ENCODE measurements at regions of chr13 and their contacts with region 1.

Region 1: DNA sequence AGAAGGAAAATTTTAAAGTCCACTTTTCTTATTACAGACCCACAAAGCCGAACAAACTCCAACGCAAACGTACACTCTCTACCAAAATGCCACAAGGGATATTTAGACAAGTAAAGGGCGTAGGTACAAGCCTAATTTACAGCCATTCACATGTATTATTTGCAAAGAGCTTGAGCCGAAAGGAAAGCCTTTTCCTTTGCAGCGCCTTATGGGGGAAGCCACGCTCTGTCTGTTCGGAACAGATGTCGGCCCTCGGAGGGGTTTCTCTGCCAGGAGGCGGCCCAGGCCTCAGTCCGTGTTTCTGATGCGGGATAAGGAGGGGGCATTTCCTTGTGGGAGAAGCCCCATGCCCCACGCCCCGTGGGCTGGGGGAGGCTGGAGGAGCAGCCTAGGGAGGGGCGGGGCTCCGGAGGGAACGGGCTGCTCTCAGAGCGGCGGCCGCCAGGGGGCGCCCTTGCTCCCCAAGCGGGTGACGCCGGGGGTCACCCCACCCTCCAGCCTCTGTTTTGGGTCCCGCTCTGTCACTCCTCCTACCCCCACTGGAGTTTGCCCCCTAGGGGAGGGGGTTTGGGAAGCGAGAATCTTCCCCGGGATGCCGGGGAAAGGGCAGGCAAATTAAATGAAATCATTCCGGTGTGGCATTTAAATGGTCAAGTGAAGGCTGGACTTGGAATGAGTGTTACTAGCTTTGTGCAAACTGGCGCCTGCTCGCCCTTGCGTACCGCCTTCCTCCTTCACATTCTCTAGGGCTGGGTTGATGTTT is 2.9 kb downstream of the HTR2A start:
- DNase-seq: peak; percentile 86
- CTCF ChIP-seq: peak; percentile 78

Region 2: DNA sequence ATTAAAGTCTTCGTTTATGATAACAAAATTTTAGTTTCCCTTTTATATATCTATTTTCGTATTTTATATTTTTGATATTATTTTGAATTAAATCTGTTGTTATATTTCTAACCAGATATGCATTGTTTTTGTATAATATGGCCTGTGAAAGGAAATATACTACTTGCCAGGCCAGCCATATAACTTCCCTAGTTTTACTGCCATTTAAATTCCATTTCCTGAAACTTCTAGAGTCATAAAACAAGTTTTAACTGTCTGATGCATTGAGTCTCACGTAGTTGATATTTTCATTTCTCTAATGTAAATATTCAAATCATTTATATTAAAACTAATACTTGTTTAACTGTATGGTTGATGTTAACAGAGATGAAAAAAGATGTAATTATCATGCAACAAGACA is 110.5 kb before region 1 on chr13:
- CTCF ChIA-PET with region 1: no interaction called
- POLR2A ChIA-PET with region 1: no interaction called
- DNase-seq: no peak
- CTCF ChIP-seq: no peak

Region 3: GRCh38 chr13:46846726-46847125 is 47.3 kb before region 1 on chr13:
- CTCF ChIA-PET with region 1: interaction called, 15 read pairs
- POLR2A ChIA-PET with region 1: no interaction called
- DNase-seq: no peak
- CTCF ChIP-seq: no peak

Region 4: DNA sequence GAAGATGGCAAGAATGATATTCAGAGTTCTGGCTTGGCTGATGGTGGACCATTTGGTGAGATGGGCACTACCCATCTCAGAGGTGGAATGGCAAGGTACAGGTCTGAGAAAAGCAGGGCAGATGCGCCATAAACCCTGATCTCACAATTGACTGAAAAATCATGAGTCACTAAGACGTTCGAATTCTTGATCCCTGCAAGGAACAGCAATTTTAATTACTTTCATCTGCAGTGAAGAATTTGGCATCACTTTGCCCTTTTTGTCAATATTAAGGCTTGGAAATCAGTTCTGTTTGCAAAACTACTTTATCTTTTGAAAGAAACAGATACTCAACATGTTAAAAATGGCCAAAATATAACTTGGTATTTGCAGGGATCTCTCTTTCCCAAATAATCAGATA is 35.2 kb before region 1 on chr13:
- CTCF ChIA-PET with region 1: interaction called, 12 read pairs
- POLR2A ChIA-PET with region 1: no interaction called
- DNase-seq: no peak
- CTCF ChIP-seq: no peak

Region 5: GRCh38 chr13:46908501-46908900 is 14.5 kb after region 1 on chr13:
- CTCF ChIA-PET with region 1: interaction called, 24 read pairs
- POLR2A ChIA-PET with region 1: no interaction called
- DNase-seq: no peak
- CTCF ChIP-seq: no peak

Region 6: GRCh38 chr13:46961719-46962118 is 67.7 kb after region 1 on chr13:
- CTCF ChIA-PET with region 1: interaction called, 15 read pairs
- POLR2A ChIA-PET with region 1: no interaction called
- DNase-seq: peak; percentile 71
- CTCF ChIP-seq: no peak

Region 7: DNA sequence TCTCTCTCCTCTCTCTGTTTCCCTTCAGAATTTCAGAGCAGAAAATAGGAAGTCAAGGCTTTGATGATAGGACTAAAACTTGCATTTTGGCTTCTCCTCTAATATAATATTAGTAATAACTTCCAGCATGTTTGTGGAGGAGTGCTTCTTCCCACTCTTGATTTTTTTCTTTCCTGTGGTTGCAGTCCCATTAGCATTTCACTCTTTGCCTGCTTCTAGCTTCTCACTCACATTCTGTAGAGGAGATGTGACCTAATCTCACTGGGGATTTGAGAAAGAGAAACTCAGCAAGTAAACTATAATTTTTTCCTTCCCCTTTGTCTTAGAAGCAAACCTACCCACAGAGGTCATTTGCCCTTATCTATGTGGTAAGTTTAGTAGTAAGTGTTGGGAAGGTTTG is 172.2 kb after region 1 on chr13:
- CTCF ChIA-PET with region 1: no interaction called
- POLR2A ChIA-PET with region 1: no interaction called
- DNase-seq: no peak
- CTCF ChIP-seq: no peak

Region 8: GRCh38 chr13:47459512-47459911 is 565.5 kb after region 1 on chr13:
- CTCF ChIA-PET with region 1: interaction called, 11 read pairs
- POLR2A ChIA-PET with region 1: no interaction called
- DNase-seq: no peak
- CTCF ChIP-seq: no peak

Region 9: GRCh38 chr13:47774671-47774994 is 880.7 kb after region 1 on chr13:
- CTCF ChIA-PET with region 1: interaction called, 11 read pairs
- POLR2A ChIA-PET with region 1: no interaction called
- DNase-seq: no peak
- CTCF ChIP-seq: no peak

Measured in GM10248 (cell line).